ENCODE measurements at regions of chr1 and their contacts with region 1.

Region 1: GRCh38 chr1:227934476-227935313 is 13.0 kb downstream of the WNT9A start:
- DNase-seq: no peak
- H3K4me3 ChIP-seq: no peak overlapping the region
- H3K27ac ChIP-seq: peak overlapping the region; percentile 52 to 79 (median 57)
- H3K4me1 ChIP-seq: peaks cover 0 to 8% (median 3%) of the 10 kb centered on the region in 4 donors
- H3K27me3 ChIP-seq: no peaks in the 10 kb centered on the region
- CTCF ChIP-seq: no peak
- EP300 ChIP-seq: peak; percentile 1
- POLR2A ChIP-seq: no peak

Region 2: DNA sequence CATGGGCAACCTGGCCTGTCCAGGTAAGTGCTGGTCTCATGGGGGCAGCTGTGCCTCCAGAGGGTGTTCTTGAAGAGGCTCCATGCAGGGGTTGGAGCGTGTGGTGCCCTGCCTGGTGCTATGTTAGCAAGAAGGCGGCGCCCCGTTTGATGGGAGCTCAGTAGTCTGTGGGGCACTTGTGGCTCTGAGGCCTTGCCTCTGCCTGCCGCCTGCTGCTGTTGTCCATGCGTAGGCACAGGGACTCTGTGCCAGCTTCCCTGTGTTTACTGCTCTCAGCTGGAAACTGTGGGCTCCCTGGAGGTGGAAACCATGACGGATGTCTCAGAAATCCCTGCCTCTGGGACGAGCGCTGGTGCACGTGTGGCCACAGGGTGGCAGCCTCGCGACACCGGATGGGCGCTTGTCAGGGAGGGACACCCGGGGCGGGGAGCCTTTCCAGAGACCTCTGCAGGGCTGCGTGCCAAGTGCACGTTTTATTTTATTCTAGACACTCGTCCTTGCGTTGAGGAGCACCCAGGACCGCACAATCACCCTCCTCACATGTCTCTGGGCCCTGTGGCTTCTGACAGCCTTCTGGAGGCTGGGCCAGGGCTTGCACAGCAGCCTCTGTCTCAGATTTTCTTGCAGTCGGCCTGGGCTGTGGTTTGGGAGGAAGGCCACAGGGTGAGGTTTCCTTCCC is 172.3 kb before region 1 on chr1:
- in situ Hi-C with region 1: loop called in 2 of 4 experiments (anchors 10 to 25 kb)
- intact Hi-C with region 1: no loop called
- DNase-seq: peak; percentile 90
- H3K4me3 ChIP-seq: no peak overlapping the region
- H3K27ac ChIP-seq: peak overlapping the region in 3 of 4 donors; percentile 53 to 80 (median 62)
- H3K4me1 ChIP-seq: peaks cover 13 to 30% (median 25%) of the 10 kb centered on the region in 4 donors
- H3K27me3 ChIP-seq: no peaks in the 10 kb centered on the region
- CTCF ChIP-seq: peak; percentile 85 to 89 (median 87)
- EP300 ChIP-seq: no peak
- POLR2A ChIP-seq: no peak